Adrenal gland (tissue), 19 donors: ENCODE measurements at regions of chr5 and their contacts with region 1.

Region 1: DNA sequence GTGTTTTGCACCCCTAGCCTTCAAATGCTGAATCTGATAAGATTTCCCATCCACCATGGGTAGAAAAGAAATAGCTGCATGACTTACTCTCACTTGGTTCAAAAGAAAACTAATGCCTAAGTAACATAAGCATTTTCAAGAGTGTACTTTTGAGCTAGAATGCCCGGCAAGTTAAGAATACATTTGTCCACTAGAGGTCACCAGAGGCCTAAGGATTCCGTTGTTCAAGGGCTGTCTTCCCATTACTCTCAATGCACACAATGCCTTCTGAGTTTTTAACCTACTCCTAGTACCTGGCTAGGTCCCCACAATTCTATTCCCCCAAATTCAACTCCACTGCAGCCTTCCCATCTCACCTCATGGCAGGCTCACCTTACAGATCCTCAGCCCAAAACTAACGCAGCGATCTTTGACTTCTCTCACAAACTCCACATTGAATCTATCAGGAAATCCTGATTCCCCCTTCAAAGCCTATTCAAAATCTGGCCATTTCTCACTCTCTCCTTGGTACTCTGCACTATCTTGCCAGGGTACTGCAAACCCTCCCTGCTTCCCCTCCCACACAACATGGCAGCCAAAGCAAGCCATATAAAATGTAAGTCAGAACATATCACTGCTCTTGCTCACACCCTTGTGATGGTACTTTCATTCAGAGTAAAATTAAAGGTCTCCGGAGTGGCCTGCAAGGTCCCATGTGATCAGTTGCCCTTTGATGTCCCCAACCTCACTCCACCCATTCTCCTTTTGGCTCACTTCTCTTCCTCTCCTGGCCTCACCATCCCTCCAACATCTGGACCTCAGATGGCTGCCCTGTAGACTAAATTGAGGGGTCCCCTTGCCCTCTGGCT is 13.4 kb downstream of the OXCT1 start:
- DNase-seq: peak; percentile 22 to 67 (median 58)
- H3K4me3 ChIP-seq: no peak overlapping the region
- H3K27ac ChIP-seq: no peak overlapping the region
- H3K4me1 ChIP-seq: no peaks in the 10 kb centered on the region
- H3K27me3 ChIP-seq: no peaks in the 10 kb centered on the region
- CTCF ChIP-seq: peak; percentile 65 to 80 (median 74)
- POLR2A ChIP-seq: no peak

Region 2: GRCh38 chr5:41587668-41588067 is 269.2 kb before region 1 on chr5:
- intact Hi-C with region 1: no loop called
- DNase-seq: no peak
- H3K4me3 ChIP-seq: no peak overlapping the region
- H3K27ac ChIP-seq: no peak overlapping the region
- H3K4me1 ChIP-seq: no peaks in the 10 kb centered on the region
- H3K27me3 ChIP-seq: no peaks in the 10 kb centered on the region
- CTCF ChIP-seq: no peak
- POLR2A ChIP-seq: no peak

Region 3: GRCh38 chr5:42057254-42057690 is 200.4 kb after region 1 on chr5:
- intact Hi-C with region 1: loop called in 1 of 2 experiments (anchors 10 kb)
- DNase-seq: peak in 5 of 7 donors; percentile 23 to 72 (median 44)
- H3K4me3 ChIP-seq: no peak overlapping the region
- H3K27ac ChIP-seq: no peak overlapping the region
- H3K4me1 ChIP-seq: no peaks in the 10 kb centered on the region
- H3K27me3 ChIP-seq: no peaks in the 10 kb centered on the region
- CTCF ChIP-seq: peak; percentile 39 to 71 (median 58)
- POLR2A ChIP-seq: no peak